Heart right ventricle (tissue), 16 donors: ENCODE measurements at regions of chr5 and their contacts with region 1.

Region 1: GRCh38 chr5:157312492-157312891 is 46.6 kb downstream of the CYFIP2 start:
- DNase-seq: no peak
- ATAC-seq: peak in 6 of 8 donors; percentile 62 to 79 (median 65)
- H3K4me3 ChIP-seq: no peak overlapping the region
- H3K27ac ChIP-seq: no peak overlapping the region
- H3K4me1 ChIP-seq: peaks cover 0 to 4% (median 0%) of the 10 kb centered on the region in 9 donors
- H3K27me3 ChIP-seq: no peaks in the 10 kb centered on the region
- CTCF ChIP-seq: peak; percentile 26 to 73 (median 66)

Region 2: DNA sequence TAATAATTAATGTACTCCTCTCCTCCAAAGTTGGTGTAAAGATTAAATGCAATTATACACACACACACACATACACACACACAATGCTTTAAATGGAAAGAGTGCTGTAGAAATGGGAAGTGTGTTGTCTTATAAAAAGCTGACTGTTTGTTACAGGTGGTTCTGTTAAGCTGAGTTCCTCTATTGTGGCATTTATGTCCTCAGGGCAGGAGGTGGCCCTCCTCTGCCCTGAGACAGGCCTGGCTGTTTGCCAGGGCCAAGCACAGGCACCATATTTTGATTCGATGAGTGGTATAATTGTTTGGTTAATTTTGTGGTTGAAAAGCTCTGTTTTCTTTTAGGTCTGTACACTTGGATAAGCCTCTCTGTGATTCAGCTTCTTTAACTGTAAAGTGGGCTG is 1725.0 kb before region 1 on chr5:
- intact Hi-C with region 1: no loop called
- DNase-seq: no peak
- ATAC-seq: no peak
- H3K4me3 ChIP-seq: no peak overlapping the region
- H3K27ac ChIP-seq: no peak overlapping the region
- H3K4me1 ChIP-seq: peaks cover 0 to 8% (median 0%) of the 10 kb centered on the region in 9 donors
- H3K27me3 ChIP-seq: no peaks in the 10 kb centered on the region
- CTCF ChIP-seq: no peak

Region 3: DNA sequence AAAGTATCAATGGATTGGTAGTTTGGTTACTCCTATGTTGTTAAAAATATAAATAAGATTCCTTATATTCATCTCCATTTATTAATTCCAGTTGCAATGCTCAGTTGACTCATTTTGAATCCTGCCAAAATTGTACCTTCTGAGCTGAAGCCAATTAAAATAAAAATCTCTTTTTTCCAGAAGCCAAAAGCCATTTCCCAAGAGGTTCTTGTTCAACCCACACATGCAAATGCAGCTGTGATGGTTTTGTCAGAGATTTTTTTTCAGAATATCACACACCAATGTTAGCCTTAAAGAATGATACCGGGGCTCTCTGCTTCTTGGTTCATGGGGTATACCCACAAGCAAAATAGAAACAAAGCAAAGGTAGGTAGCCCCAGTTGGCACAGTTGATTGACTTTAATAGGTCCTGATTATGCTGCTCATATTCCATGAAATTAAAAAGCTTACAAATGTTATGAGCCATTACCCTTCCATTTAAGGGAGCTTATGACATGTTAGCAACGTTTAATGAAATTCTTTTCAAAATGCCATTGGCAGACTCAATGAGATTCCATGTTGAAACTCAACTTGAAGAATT is 777.5 kb before region 1 on chr5:
- intact Hi-C with region 1: no loop called
- DNase-seq: no peak
- ATAC-seq: peak in 5 of 8 donors; percentile 20 to 61 (median 42)
- H3K4me3 ChIP-seq: no peak overlapping the region
- H3K27ac ChIP-seq: peak overlapping the region in 2 of 10 donors; percentile 5 to 27
- H3K4me1 ChIP-seq: peaks cover 0 to 14% (median 0%) of the 10 kb centered on the region in 9 donors
- H3K27me3 ChIP-seq: no peaks in the 10 kb centered on the region
- CTCF ChIP-seq: no peak

Region 4: DNA sequence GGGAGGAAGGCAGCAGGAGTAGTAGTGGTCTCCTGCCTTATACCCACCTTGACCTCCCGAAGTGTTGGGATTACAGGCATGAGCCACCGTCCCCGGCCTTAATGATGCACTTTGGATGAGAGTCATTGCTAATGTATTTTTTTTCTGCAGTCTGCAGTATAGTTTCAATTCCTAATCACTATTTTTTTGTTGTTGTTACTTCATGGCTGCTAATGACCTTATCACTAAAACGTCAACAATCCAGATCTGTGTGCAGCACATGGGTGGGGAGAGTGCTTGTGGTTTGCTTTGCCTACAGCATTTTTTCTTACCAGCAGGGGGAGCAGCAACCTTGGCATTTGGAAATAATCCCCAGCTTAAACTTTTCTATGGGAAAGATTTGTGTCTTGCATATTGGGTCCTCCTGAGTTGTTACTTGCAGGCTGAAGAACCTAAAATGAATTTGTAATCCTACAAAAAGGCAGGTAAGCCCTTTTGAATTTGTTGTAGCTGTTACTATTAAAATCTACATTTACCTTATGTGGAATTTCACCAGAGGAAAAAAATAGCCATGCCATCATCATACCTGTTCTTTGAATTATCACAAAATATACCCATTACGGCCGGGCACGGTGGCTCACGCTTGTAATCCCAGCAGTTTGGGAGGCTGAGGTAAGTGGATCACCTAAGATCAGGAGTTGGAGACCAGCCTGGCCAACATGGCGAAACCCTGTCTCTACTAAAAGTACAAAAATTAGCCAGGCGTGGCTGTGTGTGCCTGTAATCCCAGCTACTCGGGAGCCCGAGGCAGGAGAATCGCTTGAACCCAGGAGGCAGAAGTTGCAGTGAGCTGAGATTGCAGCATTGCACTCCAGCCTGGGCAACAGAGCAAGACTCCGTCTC is 163.5 kb before region 1 on chr5:
- intact Hi-C with region 1: loop called in 8 of 10 experiments (anchors 1 to 10 kb)
- DNase-seq: peak in 1 of 2 donors; percentile 68
- ATAC-seq: peak in 7 of 8 donors; percentile 64 to 80 (median 74)
- H3K4me3 ChIP-seq: no peak overlapping the region
- H3K27ac ChIP-seq: no peak overlapping the region
- H3K4me1 ChIP-seq: peaks cover 0 to 11% (median 4%) of the 10 kb centered on the region in 9 donors
- H3K27me3 ChIP-seq: peaks cover 0 to 4% (median 0%) of the 10 kb centered on the region in 7 donors
- CTCF ChIP-seq: peak; percentile 72 to 92 (median 86)

Region 5: DNA sequence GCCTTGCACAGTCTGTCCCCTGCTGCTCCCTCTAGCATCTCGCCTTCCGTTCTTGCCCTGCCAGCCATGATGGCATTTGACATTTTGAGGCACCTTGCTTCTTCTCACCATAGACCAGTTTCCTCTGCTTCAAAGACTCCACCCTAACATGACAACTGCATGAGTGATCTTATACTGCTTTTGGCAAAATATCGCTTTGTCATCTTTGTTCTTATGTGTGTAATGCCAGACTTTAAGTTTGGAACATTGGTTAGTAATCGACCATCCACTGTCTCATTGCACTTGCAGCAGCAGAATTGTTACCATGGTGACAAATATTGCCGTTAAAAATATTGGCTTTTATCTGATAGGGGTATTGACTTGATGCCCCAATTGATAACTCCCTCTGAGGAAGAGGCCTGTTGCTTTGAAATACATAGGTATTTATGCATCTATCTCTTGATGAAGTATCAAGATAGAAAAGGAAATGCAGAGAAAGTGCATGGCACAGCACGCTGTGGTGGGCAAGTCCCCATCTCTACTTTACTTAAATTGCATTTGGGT is 153.2 kb before region 1 on chr5:
- intact Hi-C with region 1: loop called in 5 of 10 experiments (anchors 5 to 10 kb)
- DNase-seq: no peak
- ATAC-seq: no peak
- H3K4me3 ChIP-seq: no peak overlapping the region
- H3K27ac ChIP-seq: no peak overlapping the region
- H3K4me1 ChIP-seq: no peaks in the 10 kb centered on the region
- H3K27me3 ChIP-seq: peaks cover 0 to 20% (median 7%) of the 10 kb centered on the region in 7 donors
- CTCF ChIP-seq: no peak

Region 6: GRCh38 chr5:157253547-157253946 is 58.9 kb before region 1 on chr5:
- intact Hi-C with region 1: loop called in 8 of 10 experiments (anchors 1 to 5 kb)
- DNase-seq: peak in 1 of 2 donors; percentile 43
- ATAC-seq: peak in 7 of 8 donors; percentile 66 to 90 (median 84)
- H3K4me3 ChIP-seq: no peak overlapping the region
- H3K27ac ChIP-seq: peak overlapping the region in 1 of 10 donors; percentile 63
- H3K4me1 ChIP-seq: peaks cover 0 to 36% (median 0%) of the 10 kb centered on the region in 9 donors
- H3K27me3 ChIP-seq: no peaks in the 10 kb centered on the region
- CTCF ChIP-seq: peak; percentile 47 to 91 (median 83)

Region 7: GRCh38 chr5:157265714-157266285 is 46.7 kb before region 1 on chr5 and contains the start of gene CYFIP2:
- intact Hi-C with region 1: loop called in 1 of 10 experiments (anchors 5 kb)
- DNase-seq: peak in 1 of 2 donors; percentile 70
- ATAC-seq: peak; percentile 73 to 92 (median 80)
- H3K4me3 ChIP-seq: peak within 1 kb of the TSS; percentile 16 to 82 (median 68)
- H3K27ac ChIP-seq: peak within 1 kb of the TSS; percentile 43 to 90 (median 74)
- H3K4me1 ChIP-seq: peaks cover 0 to 61% (median 15%) of the 10 kb centered on the region in 9 donors
- H3K27me3 ChIP-seq: peaks cover 0 to 6% (median 0%) of the 10 kb centered on the region in 7 donors
- CTCF ChIP-seq: no peak
- total RNA-seq, gene CYFIP2: 20.3 to 50.8 (median 34.4) TPM